ENCODE measurements at regions of chr10 and their contacts with region 1.

Region 1: DNA sequence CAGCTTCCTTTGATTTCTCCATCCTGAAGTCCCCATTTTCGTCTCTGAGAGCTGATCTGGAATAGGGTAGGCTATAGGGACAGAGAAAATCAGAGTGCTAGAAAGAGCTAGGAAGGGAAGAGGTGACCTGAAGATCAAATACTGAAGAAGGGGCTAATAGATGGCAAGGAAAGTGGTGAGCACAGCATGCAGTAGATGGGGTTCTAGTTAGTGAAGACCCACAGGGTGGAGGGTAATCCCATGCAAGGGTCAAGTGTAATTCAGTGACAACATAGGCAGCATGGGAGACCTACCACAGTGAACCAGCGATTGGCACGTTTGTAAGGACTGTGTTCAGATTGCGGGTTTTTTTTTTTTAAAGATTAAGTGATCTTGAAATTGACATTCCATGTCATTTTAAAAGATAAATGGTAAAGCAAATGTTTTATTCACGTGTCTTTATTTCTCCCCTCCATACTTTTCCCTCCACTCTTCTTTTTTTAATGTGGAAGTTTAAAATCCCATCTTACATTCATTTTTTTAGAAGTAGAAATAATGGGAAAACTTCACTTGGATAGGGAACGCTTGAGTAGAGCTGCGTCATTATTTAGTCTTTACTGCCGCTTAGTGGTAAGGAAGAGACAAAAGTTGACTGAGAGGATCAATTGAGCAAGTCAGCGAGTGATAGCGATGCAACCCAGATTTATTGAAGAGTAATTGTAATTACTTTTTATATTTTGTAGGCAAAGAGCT is 21.0 kb upstream of the ABI1 start:
- DNase-seq: no peak
- H3K4me3 ChIP-seq: no peak overlapping the region
- H3K27ac ChIP-seq: no peak overlapping the region
- H3K4me1 ChIP-seq: no peaks in the 10 kb centered on the region
- H3K27me3 ChIP-seq: peaks cover 15% of the 10 kb centered on the region
- CTCF ChIP-seq: peak; percentile 55 to 76 (median 59)
- EP300 ChIP-seq: no peak
- POLR2A ChIP-seq: no peak

Region 2: DNA sequence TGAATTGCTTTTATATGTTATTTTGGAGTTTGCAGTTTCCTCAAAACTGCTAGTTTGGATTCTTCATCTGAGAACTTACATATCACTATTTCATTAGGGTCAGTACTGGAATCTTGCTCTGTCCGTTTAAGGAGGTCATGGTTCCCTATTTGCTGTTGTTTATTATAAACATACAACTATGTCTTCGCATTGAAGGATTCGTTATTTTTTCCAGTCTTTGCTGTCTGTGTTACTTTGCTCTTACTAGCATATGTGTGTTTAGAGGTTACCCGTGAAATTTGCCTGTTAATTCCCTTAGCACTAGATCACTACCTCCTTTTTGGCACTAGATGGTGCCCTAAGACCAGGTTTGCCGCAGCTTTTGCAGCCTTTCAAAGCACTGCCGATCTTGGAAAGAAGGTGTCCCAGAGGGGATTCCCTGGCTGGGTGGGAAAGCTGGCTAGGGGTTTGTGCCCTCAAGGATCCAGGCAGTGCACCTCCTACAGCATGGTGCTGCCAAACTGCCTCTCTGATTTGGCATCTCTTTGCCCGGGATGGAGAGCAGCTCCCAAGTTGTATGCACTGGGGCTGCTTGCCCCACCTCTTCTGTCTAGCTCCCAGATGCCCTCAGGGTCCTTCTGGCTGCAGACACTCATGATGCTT is 546.7 kb before region 1 on chr10:
- in situ Hi-C with region 1: loop called in 2 of 4 experiments (anchors 10 to 25 kb)
- intact Hi-C with region 1: no loop called
- DNase-seq: peak; percentile 44
- H3K4me3 ChIP-seq: peak overlapping the region in 1 of 4 donors; percentile 13
- H3K27ac ChIP-seq: no peak overlapping the region
- H3K4me1 ChIP-seq: no peaks in the 10 kb centered on the region
- H3K27me3 ChIP-seq: no peaks in the 10 kb centered on the region
- CTCF ChIP-seq: peak; percentile 64 to 80 (median 66)
- EP300 ChIP-seq: no peak
- POLR2A ChIP-seq: no peak

Region 3: DNA sequence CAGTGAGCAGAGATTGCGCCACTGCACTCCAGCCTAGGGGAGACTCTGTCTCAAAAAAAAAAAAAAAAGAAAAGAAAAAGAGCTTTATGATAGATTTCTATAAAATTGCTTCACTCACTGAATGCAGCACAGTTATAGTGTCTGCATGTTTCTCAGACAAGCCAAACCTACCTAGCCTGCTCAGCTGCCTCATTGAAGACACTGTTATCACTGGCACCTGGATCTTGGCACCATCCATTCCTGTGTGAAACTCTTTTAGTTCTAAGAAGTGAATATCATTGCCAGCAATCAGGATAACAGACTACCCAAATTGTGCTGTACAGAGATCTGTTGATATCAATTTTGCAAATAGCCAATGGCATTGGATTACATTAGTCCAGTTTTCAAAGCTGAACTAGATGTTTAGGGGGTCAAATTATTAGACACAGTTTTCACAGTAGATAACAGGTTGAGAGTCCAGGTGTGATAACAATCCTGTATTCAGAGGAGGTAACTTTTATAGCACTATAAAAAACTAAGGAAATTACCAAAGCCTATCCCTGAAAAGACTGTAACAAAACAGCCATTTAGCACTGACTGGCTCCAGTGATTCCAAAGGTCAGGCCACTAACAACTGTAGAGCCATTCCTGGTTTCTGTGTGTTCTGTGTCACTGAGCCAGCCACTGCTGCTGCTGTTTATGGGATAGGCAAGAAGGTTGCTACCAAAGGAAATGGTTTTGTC is 167.2 kb before region 1 on chr10:
- in situ Hi-C with region 1: loop called in 1 of 4 experiments (anchors 5 kb)
- intact Hi-C with region 1: no loop called
- DNase-seq: peak; percentile 80
- H3K4me3 ChIP-seq: no peak overlapping the region
- H3K27ac ChIP-seq: peak overlapping the region; percentile 79 to 85 (median 84)
- H3K4me1 ChIP-seq: peaks cover 3 to 35% (median 17%) of the 10 kb centered on the region in 4 donors
- H3K27me3 ChIP-seq: no peaks in the 10 kb centered on the region
- CTCF ChIP-seq: no peak
- EP300 ChIP-seq: peak; percentile 12
- POLR2A ChIP-seq: no peak

Region 4: GRCh38 chr10:26725837-26726727 is 155.7 kb before region 1 on chr10:
- in situ Hi-C with region 1: loop called in 2 of 4 experiments (anchors 5 kb)
- intact Hi-C with region 1: loop called (anchors 5 kb)
- DNase-seq: peak; percentile 63
- H3K4me3 ChIP-seq: no peak overlapping the region
- H3K27ac ChIP-seq: no peak overlapping the region
- H3K4me1 ChIP-seq: peaks cover 0 to 3% (median 1%) of the 10 kb centered on the region in 4 donors
- H3K27me3 ChIP-seq: no peaks in the 10 kb centered on the region
- CTCF ChIP-seq: peak; percentile 75 to 86 (median 80)
- EP300 ChIP-seq: no peak
- POLR2A ChIP-seq: no peak

Region 5: DNA sequence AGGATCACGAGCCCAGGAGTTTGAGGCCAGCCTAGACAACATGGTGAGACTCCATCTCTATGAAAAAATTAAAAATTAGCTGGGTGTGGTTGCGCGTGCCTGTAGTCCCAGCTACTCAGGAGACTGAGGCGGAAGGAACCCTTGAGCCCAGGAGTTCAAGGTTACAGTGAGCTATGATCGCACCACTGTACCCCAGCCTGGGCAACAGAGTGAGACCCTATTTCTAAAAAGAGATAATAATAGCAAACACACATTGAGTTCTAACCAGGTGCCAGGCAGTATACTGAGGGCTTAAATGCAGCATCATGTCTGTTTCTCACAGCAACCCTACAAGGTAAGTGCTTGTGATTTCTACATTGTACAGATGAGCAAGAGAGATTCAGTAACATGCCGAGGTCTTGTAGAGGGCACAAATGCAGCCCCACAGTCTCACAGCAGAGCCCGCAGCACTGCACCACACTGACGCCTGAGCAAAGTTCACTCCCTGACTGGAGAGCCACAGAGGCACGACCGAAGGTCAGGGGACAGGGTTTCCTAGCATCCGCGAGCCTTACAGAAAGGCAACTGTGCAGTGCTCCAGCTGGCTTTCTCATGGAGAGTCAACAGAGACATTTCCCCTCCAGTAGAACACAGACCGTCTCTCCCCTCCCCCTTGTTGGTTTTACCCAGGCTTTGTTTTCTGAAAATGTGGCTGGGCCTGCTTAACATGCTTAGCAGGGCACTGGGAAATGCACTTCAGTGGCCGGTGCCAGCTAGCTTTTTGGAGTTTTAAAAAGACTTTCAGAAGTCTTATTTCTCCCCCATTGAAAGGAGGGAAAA is 147.8 kb before region 1 on chr10:
- in situ Hi-C with region 1: loop called in 2 of 4 experiments (anchors 5 kb)
- intact Hi-C with region 1: loop called (anchors 5 kb)
- DNase-seq: peak; percentile 44
- H3K4me3 ChIP-seq: no peak overlapping the region
- H3K27ac ChIP-seq: no peak overlapping the region
- H3K4me1 ChIP-seq: peaks cover 0 to 8% (median 2%) of the 10 kb centered on the region in 4 donors
- H3K27me3 ChIP-seq: no peaks in the 10 kb centered on the region
- CTCF ChIP-seq: no peak
- EP300 ChIP-seq: no peak
- POLR2A ChIP-seq: no peak